Naive thymus-derived CD4-positive, alpha-beta T cell (primary cell): ENCODE measurements at regions of chr11 and their contacts with region 1.

Region 1: GRCh38 chr11:447923-448731 is 2.0 kb upstream of the PTDSS2 start:
- DNase-seq: peak; percentile 86 to 98 (median 93)
- ATAC-seq: peak; percentile 86
- H3K4me3 ChIP-seq: peak overlapping the region; percentile 74
- H3K4me3 Mint-ChIP-seq: peak overlapping the region; percentile 84 to 95 (median 89)
- H3K27ac ChIP-seq: peak overlapping the region; percentile 98
- H3K27ac Mint-ChIP-seq: peak overlapping the region; percentile 79 to 98 (median 95)
- H3K4me1 ChIP-seq: peaks cover 16 to 24% of the 10 kb centered on the region in 2 donors
- H3K4me1 Mint-ChIP-seq: peaks cover 9 to 25% (median 22%) of the 10 kb centered on the region in 7 donors
- H3K27me3 ChIP-seq: no peaks in the 10 kb centered on the region
- H3K27me3 Mint-ChIP-seq: peaks cover 0 to 7% (median 0%) of the 10 kb centered on the region in 5 donors

Region 2: GRCh38 chr11:236774-237767 is 211.1 kb before region 1 on chr11 and contains the start of gene PSMD13:
- CTCF ChIA-PET with region 1: interaction called, 3 read pairs
- POLR2A ChIA-PET with region 1: interaction called, 7 read pairs
- intact Hi-C with region 1: loop called (anchors 1 kb)
- DNase-seq: peak; percentile 82 to 92 (median 88)
- ATAC-seq: peak; percentile 88
- H3K4me3 ChIP-seq: peak within 1 kb of the TSS; percentile 100
- H3K4me3 Mint-ChIP-seq: peak within 1 kb of the TSS; percentile 84 to 99 (median 96)
- H3K27ac ChIP-seq: peak within 1 kb of the TSS; percentile 97
- H3K27ac Mint-ChIP-seq: peak within 1 kb of the TSS; percentile 84 to 100 (median 100)
- H3K4me1 ChIP-seq: peaks cover 17 to 23% of the 10 kb centered on the region in 2 donors
- H3K4me1 Mint-ChIP-seq: peaks cover 26 to 66% (median 53%) of the 10 kb centered on the region in 7 donors
- H3K27me3 ChIP-seq: no peaks in the 10 kb centered on the region
- H3K27me3 Mint-ChIP-seq: no peaks in the 10 kb centered on the region
- total RNA-seq, gene PSMD13: 64.3 to 172 (median 86.9) TPM

Region 3: GRCh38 chr11:269146-269890 is 178.8 kb before region 1 on chr11:
- CTCF ChIA-PET with region 1: no interaction called
- POLR2A ChIA-PET with region 1: interaction called, 4 read pairs
- intact Hi-C with region 1: loop called (anchors 1 kb)
- DNase-seq: peak; percentile 43 to 95 (median 88)
- ATAC-seq: peak; percentile 84
- H3K4me3 ChIP-seq: peak overlapping the region; percentile 59
- H3K4me3 Mint-ChIP-seq: peak overlapping the region; percentile 85 to 96 (median 90)
- H3K27ac ChIP-seq: peak overlapping the region; percentile 80
- H3K27ac Mint-ChIP-seq: peak overlapping the region; percentile 92 to 100 (median 99)
- H3K4me1 ChIP-seq: peaks cover 24 to 26% of the 10 kb centered on the region in 2 donors
- H3K4me1 Mint-ChIP-seq: peaks cover 20 to 47% (median 35%) of the 10 kb centered on the region in 7 donors
- H3K27me3 ChIP-seq: no peaks in the 10 kb centered on the region
- H3K27me3 Mint-ChIP-seq: peaks cover 0 to 8% (median 0%) of the 10 kb centered on the region in 5 donors

Region 4: DNA sequence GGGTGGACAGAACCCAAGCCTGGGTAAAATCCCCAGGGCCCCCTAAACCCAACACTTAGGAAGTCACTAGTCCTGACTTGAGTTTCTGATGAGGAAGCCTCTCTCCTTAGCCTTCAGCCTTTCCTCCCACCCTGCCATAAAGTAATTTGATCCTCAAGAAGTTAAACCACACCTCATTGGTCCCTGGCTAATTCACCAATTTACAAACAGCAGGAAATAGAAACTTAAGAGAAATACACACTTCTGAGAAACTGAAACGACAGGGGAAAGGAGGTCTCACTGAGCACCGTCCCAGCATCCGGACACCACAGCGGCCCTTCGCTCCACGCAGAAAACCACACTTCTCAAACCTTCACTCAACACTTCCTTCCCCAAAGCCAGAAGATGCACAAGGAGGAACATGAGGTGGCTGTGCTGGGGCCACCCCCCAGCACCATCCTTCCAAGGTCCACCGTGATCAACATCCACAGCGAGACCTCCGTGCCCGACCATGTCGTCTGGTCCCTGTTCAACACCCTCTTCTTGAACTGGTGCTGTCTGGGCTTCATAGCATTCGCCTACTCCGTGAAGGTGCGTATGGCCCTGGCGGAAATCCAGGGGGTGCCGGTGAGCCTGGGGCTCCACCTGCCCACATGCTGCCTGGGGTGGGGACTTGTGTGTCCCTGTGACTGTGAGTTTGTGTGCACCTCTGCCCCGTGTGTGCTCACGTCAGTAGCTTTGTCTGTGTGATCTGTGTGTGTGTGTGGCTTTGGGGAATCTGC is 134.2 kb before region 1 on chr11 and contains the start of gene IFITM1:
- CTCF ChIA-PET with region 1: interaction called, 6 read pairs
- POLR2A ChIA-PET with region 1: interaction called, 6 read pairs
- intact Hi-C with region 1: loop called in 1 of 2 experiments (anchors 2 kb)
- DNase-seq: peak in 8 of 9 donors; percentile 55 to 80 (median 76)
- ATAC-seq: peak; percentile 72
- H3K4me3 ChIP-seq: peak within 1 kb of the TSS; percentile 71
- H3K4me3 Mint-ChIP-seq: peak within 1 kb of the TSS; percentile 88 to 100 (median 96)
- H3K27ac ChIP-seq: peak within 1 kb of the TSS; percentile 95
- H3K27ac Mint-ChIP-seq: peak within 1 kb of the TSS; percentile 94 to 99 (median 99)
- H3K4me1 ChIP-seq: peaks cover 13 to 37% of the 10 kb centered on the region in 2 donors
- H3K4me1 Mint-ChIP-seq: peaks cover 26 to 43% (median 34%) of the 10 kb centered on the region in 7 donors
- H3K27me3 ChIP-seq: no peaks in the 10 kb centered on the region
- H3K27me3 Mint-ChIP-seq: peaks cover 0 to 3% (median 0%) of the 10 kb centered on the region in 5 donors
- total RNA-seq, gene IFITM1: 97.4 to 985 (median 241) TPM

Region 5: DNA sequence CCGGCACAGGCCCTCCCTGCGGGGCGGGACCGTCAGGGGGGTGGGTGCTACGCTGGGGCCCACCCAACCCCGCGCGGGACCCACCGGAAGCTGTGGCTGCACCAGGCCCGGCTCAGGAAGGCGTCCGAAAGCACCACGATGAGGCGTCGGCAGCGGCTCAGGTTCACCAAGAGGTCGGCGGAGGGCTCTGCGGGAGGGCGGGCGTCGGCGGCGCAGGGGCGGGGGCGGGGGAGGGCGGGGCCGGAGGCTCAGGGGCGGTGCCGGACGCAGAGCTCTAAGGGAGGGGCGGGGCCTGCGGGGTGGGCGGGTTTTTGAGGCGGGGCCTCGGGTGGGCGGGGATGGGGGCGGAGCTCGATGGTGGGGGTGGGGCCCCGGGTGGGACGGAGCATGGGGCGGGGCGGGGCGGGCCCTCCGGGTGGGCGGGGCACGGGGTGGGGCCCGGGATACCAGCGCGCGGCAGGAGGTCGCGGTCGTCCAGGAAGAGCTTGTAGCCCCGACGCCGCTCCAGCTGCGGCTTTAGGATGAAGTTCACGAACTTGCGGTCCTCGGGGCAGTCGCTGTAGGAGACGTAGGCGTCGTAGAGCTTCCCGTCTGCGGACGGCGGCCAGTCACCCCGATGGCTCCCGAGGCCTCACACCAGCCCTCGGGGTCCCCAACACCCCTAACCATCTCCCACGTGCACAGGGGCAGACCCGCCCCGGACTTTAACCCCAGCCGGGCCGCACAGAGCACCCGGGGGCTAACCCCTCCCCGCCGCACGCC is 41.0 kb before region 1 on chr11:
- CTCF ChIA-PET with region 1: interaction called, 36 read pairs
- POLR2A ChIA-PET with region 1: interaction called, 109 read pairs
- intact Hi-C with region 1: loop called (anchors 1 kb)
- DNase-seq: peak; percentile 80 to 93 (median 92)
- ATAC-seq: peak; percentile 90
- H3K4me3 ChIP-seq: no peak overlapping the region
- H3K4me3 Mint-ChIP-seq: peak overlapping the region in 6 of 10 donors; percentile 12 to 60 (median 38)
- H3K27ac ChIP-seq: peak overlapping the region; percentile 75
- H3K27ac Mint-ChIP-seq: peak overlapping the region in 7 of 9 donors; percentile 21 to 85 (median 51)
- H3K4me1 ChIP-seq: peaks cover 9 to 13% of the 10 kb centered on the region in 2 donors
- H3K4me1 Mint-ChIP-seq: peaks cover 4 to 21% (median 6%) of the 10 kb centered on the region in 7 donors
- H3K27me3 ChIP-seq: no peaks in the 10 kb centered on the region
- H3K27me3 Mint-ChIP-seq: no peaks in the 10 kb centered on the region

Region 6: DNA sequence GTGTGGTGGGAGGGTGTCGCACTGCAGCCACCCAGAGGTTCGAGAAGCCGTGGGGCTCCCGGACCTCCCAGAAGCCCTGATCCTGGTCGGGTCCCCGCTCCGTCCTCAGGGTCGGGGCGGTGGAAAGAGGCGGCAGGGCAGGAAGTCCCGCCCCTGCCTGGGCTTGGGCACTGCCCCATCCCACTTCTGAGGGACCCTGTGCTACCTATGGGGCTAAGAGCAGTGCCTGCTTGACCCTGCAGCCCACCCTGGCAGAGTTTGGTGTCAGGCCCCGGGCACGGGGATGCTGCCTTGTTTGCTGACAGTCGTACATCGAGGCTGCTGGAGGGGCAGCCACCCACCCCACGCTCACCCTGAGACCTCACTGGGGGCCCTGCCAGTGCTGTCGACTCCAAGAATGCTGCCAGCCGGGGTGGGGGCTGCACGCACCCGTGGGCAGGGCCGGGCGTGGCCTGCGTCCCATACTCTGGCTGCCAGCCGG is 39.5 kb after region 1 on chr11:
- CTCF ChIA-PET with region 1: no interaction called
- POLR2A ChIA-PET with region 1: no interaction called
- intact Hi-C with region 1: no loop called
- DNase-seq: no peak
- ATAC-seq: no peak
- H3K4me3 ChIP-seq: no peak overlapping the region
- H3K4me3 Mint-ChIP-seq: no peak overlapping the region
- H3K27ac ChIP-seq: no peak overlapping the region
- H3K27ac Mint-ChIP-seq: no peak overlapping the region
- H3K4me1 ChIP-seq: no peaks in the 10 kb centered on the region
- H3K4me1 Mint-ChIP-seq: no peaks in the 10 kb centered on the region
- H3K27me3 ChIP-seq: no peaks in the 10 kb centered on the region
- H3K27me3 Mint-ChIP-seq: no peaks in the 10 kb centered on the region

Region 7: DNA sequence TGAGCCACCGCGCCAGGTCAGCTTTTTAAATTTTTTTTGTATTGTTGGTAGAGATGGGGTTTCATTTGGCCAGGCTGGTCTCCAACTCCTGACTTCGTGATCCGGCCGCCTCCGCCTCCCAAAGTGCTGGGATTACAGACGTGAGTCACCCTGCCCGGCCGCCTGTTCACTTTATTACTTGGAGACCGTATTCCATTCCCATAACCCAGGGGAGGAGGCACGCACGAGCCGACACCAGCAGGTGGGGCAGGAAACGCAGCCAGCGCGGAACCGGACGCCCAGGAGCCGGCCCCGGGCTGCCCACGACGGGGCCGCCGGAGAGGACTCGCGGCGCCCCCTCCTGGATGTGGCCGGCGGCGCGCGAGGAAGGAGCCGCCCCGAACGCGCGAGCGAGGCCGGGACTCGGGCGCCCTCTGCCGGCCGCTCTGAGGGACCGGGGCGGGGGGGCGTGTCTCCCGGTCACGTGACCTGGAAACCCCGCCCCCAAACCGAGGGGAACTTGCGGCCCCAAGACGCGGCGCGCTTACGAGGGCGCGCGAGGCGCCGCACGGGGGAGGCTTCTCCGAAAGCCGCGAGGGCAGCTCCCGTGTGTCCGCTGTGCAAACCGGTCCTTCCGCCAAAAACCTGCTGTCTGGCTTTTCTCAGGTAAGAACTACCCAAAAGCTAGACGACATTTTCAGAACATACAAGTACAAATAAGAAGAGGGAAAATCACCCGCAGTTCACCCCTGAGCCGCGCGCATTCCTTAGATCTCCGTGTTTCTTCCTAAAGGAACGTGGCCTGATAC is 70.5 kb after region 1 on chr11:
- CTCF ChIA-PET with region 1: interaction called, 3 read pairs
- POLR2A ChIA-PET with region 1: no interaction called
- intact Hi-C with region 1: loop called (anchors 1 kb)
- DNase-seq: peak; percentile 69 to 94 (median 87)
- ATAC-seq: peak; percentile 99
- H3K4me3 ChIP-seq: peak overlapping the region; percentile 28
- H3K4me3 Mint-ChIP-seq: peak overlapping the region; percentile 81 to 91 (median 87)
- H3K27ac ChIP-seq: peak overlapping the region; percentile 58
- H3K27ac Mint-ChIP-seq: peak overlapping the region; percentile 70 to 92 (median 85)
- H3K4me1 ChIP-seq: peaks cover 4% of the 10 kb centered on the region in 2 donors
- H3K4me1 Mint-ChIP-seq: peaks cover 2 to 8% (median 4%) of the 10 kb centered on the region in 7 donors
- H3K27me3 ChIP-seq: no peaks in the 10 kb centered on the region
- H3K27me3 Mint-ChIP-seq: no peaks in the 10 kb centered on the region

Region 8: DNA sequence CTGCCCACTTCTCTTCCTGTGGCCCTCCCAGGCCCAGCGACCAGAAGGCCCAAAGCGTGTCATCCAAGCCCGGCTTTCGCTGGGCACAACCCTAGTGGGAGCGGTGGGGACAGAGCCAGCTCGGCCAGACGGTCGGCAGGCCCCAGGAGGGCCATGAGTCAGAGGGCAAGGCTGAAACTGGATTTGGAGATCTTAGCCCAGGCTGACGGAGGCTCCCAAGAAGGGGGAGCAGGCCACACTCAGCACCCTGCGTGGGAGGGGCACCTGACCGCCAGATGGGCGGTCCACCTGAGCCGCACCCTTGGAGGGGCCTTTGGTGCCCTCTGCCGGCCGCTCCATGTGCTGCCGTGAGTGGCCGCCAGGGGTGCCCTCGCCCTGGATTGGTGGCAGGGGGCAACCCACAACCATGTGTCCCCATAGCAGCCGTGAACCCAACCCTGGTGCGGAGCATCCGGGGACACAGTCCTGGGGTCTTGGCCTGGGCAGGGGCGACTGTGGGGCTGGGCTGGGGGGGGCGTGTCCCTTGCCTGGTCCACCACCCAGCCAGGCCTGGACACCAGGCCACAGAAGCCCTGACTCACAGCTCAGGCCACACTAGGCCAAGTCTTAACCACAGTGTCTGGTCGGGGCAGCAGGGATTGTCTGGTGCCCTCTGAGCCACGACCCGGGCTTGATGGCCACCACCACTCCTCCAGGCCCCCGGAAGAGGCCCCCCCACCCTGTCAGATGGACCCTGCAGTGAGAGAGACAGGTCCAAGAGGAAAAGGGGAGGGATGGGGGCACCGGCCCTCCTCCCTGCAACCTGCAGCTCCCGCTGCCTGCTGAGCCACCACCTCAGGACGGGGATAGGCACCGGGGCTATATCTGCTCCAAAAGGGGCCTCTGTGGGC is 280.0 kb after region 1 on chr11:
- CTCF ChIA-PET with region 1: interaction called, 3 read pairs
- POLR2A ChIA-PET with region 1: no interaction called
- intact Hi-C with region 1: loop called in 1 of 2 experiments (anchors 10 kb)
- DNase-seq: peak; percentile 52 to 86 (median 71)
- ATAC-seq: peak; percentile 93
- H3K4me3 ChIP-seq: no peak overlapping the region
- H3K4me3 Mint-ChIP-seq: no peak overlapping the region
- H3K27ac ChIP-seq: no peak overlapping the region
- H3K27ac Mint-ChIP-seq: no peak overlapping the region
- H3K4me1 ChIP-seq: peaks cover 11 to 17% of the 10 kb centered on the region in 2 donors
- H3K4me1 Mint-ChIP-seq: peaks cover 4 to 11% (median 8%) of the 10 kb centered on the region in 7 donors
- H3K27me3 ChIP-seq: no peaks in the 10 kb centered on the region
- H3K27me3 Mint-ChIP-seq: peaks cover 0 to 8% (median 4%) of the 10 kb centered on the region in 5 donors